ENCODE measurements at regions of chr5 and their contacts with region 1.

Region 1: DNA sequence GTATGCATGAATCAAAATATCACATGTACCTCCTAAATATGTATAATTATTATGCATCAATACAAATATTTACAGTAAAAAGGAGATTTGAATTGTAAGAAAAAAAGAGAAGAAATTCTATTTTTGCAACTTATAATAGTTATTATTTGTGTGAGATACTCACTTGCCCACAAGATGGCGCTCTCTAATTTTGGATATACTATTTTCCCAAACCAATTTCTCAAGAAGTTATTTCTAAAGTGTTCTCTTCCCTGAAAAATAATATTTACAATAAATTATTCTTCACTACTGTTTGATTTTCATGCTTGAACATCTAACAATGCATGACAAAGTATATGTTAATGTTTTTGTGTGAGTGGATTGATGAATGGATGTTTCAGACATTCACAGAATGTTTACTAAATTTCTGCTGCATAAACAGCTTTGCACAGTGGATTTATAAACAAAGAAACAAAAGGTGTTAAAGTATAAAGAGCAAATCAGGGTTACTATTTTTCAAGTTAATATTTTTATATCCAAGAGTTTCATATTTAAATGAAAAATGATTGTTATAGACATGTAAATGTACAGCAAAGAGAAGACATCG is 503.4 kb downstream of the PDE4D start:
- DNase-seq: peak; percentile 4 to 35 (median 12)
- ATAC-seq: no peak
- H3K4me3 ChIP-seq: no peak overlapping the region
- H3K27ac ChIP-seq: no peak overlapping the region
- H3K4me1 ChIP-seq: no peaks in the 10 kb centered on the region
- H3K27me3 ChIP-seq: no peaks in the 10 kb centered on the region
- CTCF ChIP-seq: peak in 1 of 3 experiments; percentile 59; a peak in 3 of 6 replicates
- EP300 ChIP-seq: no peak
- POLR2A ChIP-seq: no peak
- RAD21 ChIP-seq: peak; percentile 52 to 60

Region 2: DNA sequence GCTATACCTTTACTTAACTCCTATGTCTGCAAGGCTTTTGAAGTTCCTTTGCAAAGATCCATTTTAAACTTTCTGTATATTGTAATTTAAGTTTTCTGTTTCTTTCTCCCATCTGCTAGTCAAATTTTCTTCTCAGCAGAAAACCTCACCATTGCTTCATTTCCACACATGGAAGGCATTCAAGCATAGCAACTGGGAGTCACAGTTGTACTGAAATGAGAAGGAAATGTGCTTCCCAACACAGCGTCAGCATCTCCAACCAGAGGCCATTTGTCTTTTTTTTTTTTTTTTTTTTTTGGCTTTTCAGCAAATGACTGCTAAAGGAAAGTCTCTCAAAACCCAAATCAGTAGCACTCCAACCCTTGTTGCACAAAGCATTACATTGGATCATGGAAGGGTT is 714.8 kb before region 1 on chr5:
- CTCF ChIA-PET with region 1: no interaction called
- POLR2A ChIA-PET with region 1: no interaction called
- in situ Hi-C with region 1: no loop called
- intact Hi-C with region 1: no loop called
- DNase-seq: no peak
- ATAC-seq: no peak
- H3K4me3 ChIP-seq: no peak overlapping the region
- H3K27ac ChIP-seq: no peak overlapping the region
- H3K4me1 ChIP-seq: no peaks in the 10 kb centered on the region
- H3K27me3 ChIP-seq: no peaks in the 10 kb centered on the region
- CTCF ChIP-seq: no peak
- EP300 ChIP-seq: no peak
- POLR2A ChIP-seq: no peak
- RAD21 ChIP-seq: no peak

Region 3: GRCh38 chr5:59317023-59317773 is 73.0 kb before region 1 on chr5:
- CTCF ChIA-PET with region 1: no interaction called
- POLR2A ChIA-PET with region 1: no interaction called
- in situ Hi-C with region 1: no loop called
- intact Hi-C with region 1: no loop called
- DNase-seq: no peak
- ATAC-seq: no peak
- H3K4me3 ChIP-seq: no peak overlapping the region
- H3K27ac ChIP-seq: no peak overlapping the region
- H3K4me1 ChIP-seq: no peaks in the 10 kb centered on the region
- H3K27me3 ChIP-seq: no peaks in the 10 kb centered on the region
- CTCF ChIP-seq: no peak
- EP300 ChIP-seq: no peak
- POLR2A ChIP-seq: no peak
- RAD21 ChIP-seq: no peak

Region 4: GRCh38 chr5:59516161-59516560 is 126.0 kb after region 1 on chr5:
- CTCF ChIA-PET with region 1: no interaction called
- POLR2A ChIA-PET with region 1: no interaction called
- in situ Hi-C with region 1: no loop called
- intact Hi-C with region 1: no loop called
- DNase-seq: no peak
- ATAC-seq: no peak
- H3K4me3 ChIP-seq: no peak overlapping the region
- H3K27ac ChIP-seq: no peak overlapping the region
- H3K4me1 ChIP-seq: no peaks in the 10 kb centered on the region
- H3K27me3 ChIP-seq: no peaks in the 10 kb centered on the region
- CTCF ChIP-seq: no peak
- EP300 ChIP-seq: no peak
- POLR2A ChIP-seq: no peak
- RAD21 ChIP-seq: no peak

Region 5: DNA sequence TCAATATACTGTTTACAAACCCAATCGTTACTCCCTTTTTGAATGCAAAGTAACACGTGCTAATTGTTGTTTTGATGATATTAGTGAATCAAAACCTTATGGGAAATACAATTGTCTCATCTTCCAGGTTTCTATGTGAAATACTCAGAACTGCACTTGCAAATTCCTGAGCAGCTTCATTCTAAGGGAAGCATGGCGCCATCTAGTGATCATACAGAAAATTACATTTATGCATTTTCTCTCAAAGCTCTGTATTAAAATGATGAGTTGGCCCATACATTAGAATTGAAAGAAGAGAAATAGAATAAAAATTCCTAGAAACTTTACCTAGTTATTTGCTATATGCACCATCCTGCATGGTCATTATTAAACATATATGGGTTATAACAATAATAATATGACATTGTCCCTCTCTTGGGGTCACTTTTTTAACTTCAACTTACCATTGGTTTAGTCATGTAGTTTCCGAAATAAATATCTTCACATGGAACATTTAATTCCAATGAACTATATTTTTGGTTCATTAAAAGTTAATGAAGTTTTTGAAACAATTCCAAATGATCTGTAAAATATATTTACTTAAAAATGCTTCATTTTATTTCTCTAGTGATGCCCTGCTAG is 283.4 kb after region 1 on chr5:
- CTCF ChIA-PET with region 1: no interaction called
- POLR2A ChIA-PET with region 1: no interaction called
- in situ Hi-C with region 1: no loop called
- intact Hi-C with region 1: loop called (anchors 1 kb)
- DNase-seq: peak; percentile 10 to 42 (median 25)
- ATAC-seq: no peak; the same call in 2 of the 3 replicates
- H3K4me3 ChIP-seq: no peak overlapping the region
- H3K27ac ChIP-seq: no peak overlapping the region
- H3K4me1 ChIP-seq: no peaks in the 10 kb centered on the region
- H3K27me3 ChIP-seq: no peaks in the 10 kb centered on the region
- CTCF ChIP-seq: peak; percentile 38 to 70 (median 52); a peak in 5 of 6 replicates
- EP300 ChIP-seq: no peak
- POLR2A ChIP-seq: no peak
- RAD21 ChIP-seq: peak; percentile 59 to 71

Region 6: GRCh38 chr5:59799668-59800346 is 409.6 kb after region 1 on chr5:
- CTCF ChIA-PET with region 1: interaction called, 4 read pairs
- POLR2A ChIA-PET with region 1: no interaction called
- in situ Hi-C with region 1: no loop called
- intact Hi-C with region 1: loop called (anchors 1 kb)
- DNase-seq: peak; percentile 22 to 50 (median 24)
- ATAC-seq: peak; percentile 76
- H3K4me3 ChIP-seq: no peak overlapping the region
- H3K27ac ChIP-seq: no peak overlapping the region
- H3K4me1 ChIP-seq: no peaks in the 10 kb centered on the region
- H3K27me3 ChIP-seq: no peaks in the 10 kb centered on the region
- CTCF ChIP-seq: peak; percentile 42 to 78 (median 51); a peak in 4 of 6 replicates
- EP300 ChIP-seq: no peak
- POLR2A ChIP-seq: no peak
- RAD21 ChIP-seq: peak; percentile 68 to 78